ENCODE measurements at regions of chr11 and their contacts with region 1.

Region 1: GRCh38 chr11:15893080-15893492 is 463.3 kb downstream of the SOX6 start:
- DNase-seq: peak; percentile 89
- ATAC-seq: peak; percentile 77
- H3K4me3 ChIP-seq: no peak overlapping the region
- H3K27ac ChIP-seq: peak overlapping the region; percentile 88
- H3K4me1 ChIP-seq: peaks cover 44% of the 10 kb centered on the region
- H3K27me3 ChIP-seq: no peaks in the 10 kb centered on the region
- CTCF ChIP-seq: no peak
- POLR2A ChIP-seq: no peak
- RAD21 ChIP-seq: no peak; the same call in 1 of the 2 replicates

Region 2: DNA sequence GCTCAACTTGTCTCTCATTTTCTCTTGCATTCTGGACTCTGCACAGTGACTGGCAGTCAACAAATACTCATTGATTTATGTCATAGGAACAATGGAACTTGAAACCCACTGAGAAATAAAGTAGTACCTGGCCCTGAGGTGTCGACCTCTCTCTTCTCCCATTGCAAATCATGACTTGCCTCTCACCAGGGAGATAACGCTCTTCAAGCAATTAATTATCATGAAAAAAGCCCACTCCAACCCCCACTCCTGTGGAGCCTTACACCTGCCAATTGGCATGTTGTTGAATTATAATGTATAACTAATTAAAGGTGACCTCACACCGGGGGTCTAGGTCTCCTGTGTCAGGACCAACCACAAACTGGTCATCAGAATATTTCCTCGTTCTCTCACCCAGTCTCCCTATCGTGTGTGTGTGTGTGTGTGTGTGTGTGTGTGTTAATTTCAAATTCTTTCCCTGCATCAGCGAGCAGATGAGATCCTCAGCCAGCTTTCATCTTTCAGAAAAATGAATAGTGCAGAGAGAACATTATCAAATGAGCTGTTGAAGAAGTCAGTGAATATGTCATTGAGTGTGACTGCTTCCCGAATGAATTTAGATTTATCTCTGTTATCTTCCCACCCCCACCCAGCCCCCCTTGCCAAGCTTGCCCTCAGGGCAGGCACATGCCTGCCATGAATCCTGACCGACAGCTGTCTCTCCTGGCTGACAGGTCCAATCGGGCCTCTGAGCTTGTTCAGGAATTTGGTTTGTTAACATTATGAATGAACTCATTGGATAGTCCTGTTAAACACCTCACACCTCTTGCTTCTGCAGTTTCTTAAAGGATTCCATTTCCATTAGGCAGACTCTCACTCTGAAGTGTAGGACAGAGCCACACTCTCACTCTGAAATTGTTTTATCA is 420.9 kb before region 1 on chr11:
- CTCF ChIA-PET with region 1: no interaction called
- POLR2A ChIA-PET with region 1: interaction called, 14 read pairs
- dilution Hi-C with region 1: no loop called
- in situ Hi-C with region 1: no loop called
- intact Hi-C with region 1: no loop called
- DNase-seq: no peak
- ATAC-seq: no peak
- H3K4me3 ChIP-seq: no peak overlapping the region
- H3K27ac ChIP-seq: no peak overlapping the region
- H3K4me1 ChIP-seq: no peaks in the 10 kb centered on the region
- H3K27me3 ChIP-seq: no peaks in the 10 kb centered on the region
- CTCF ChIP-seq: no peak
- POLR2A ChIP-seq: no peak
- RAD21 ChIP-seq: no peak

Region 3: GRCh38 chr11:16318320-16318719 is 425.2 kb after region 1 on chr11:
- CTCF ChIA-PET with region 1: no interaction called
- POLR2A ChIA-PET with region 1: interaction called, 11 read pairs
- dilution Hi-C with region 1: no loop called
- in situ Hi-C with region 1: no loop called
- intact Hi-C with region 1: no loop called
- DNase-seq: no peak
- ATAC-seq: no peak
- H3K4me3 ChIP-seq: no peak overlapping the region
- H3K27ac ChIP-seq: no peak overlapping the region
- H3K4me1 ChIP-seq: no peaks in the 10 kb centered on the region; the same call in 1 of the 2 replicates
- H3K27me3 ChIP-seq: no peaks in the 10 kb centered on the region
- CTCF ChIP-seq: no peak
- POLR2A ChIP-seq: no peak
- RAD21 ChIP-seq: no peak